ENCODE measurements at regions of chr3 and their contacts with region 1.

Region 1: GRCh38 chr3:52339612-52340011 is 23.5 kb downstream of the DNAH1 start:
- DNase-seq: peak; percentile 71
- H3K4me3 ChIP-seq: no peak overlapping the region
- H3K27ac ChIP-seq: no peak overlapping the region
- H3K27me3 ChIP-seq: no peaks in the 10 kb centered on the region
- CTCF ChIP-seq: peak; percentile 70

Region 2: GRCh38 chr3:52225452-52226228 is 114.0 kb before region 1 on chr3 and contains the start of gene TLR9:
- CTCF ChIA-PET with region 1: interaction called, 128 read pairs
- POLR2A ChIA-PET with region 1: no interaction called
- DNase-seq: no peak
- H3K4me3 ChIP-seq: no peak within 1 kb of the TSS
- H3K27ac ChIP-seq: no peak within 1 kb of the TSS
- H3K27me3 ChIP-seq: no peaks in the 10 kb centered on the region
- CTCF ChIP-seq: no peak
- polyA plus RNA-seq, gene TLR9: 0.02 and 0.05 TPM in 2 replicates

Region 3: GRCh38 chr3:52238761-52239701 is 100.6 kb before region 1 on chr3 and contains the start of gene TWF2:
- CTCF ChIA-PET with region 1: interaction called, 22 read pairs
- POLR2A ChIA-PET with region 1: no interaction called
- DNase-seq: peak; percentile 45
- H3K4me3 ChIP-seq: peak within 1 kb of the TSS; percentile 96
- H3K27ac ChIP-seq: peak within 1 kb of the TSS; percentile 99
- H3K27me3 ChIP-seq: no peaks in the 10 kb centered on the region
- CTCF ChIP-seq: peak; percentile 40
- polyA plus RNA-seq, gene TWF2: 96.6 and 128 TPM in 2 replicates

Region 4: GRCh38 chr3:52291508-52292181 is 48.0 kb before region 1 on chr3:
- CTCF ChIA-PET with region 1: interaction called, 51 read pairs
- POLR2A ChIA-PET with region 1: no interaction called
- DNase-seq: no peak
- H3K4me3 ChIP-seq: no peak overlapping the region
- H3K27ac ChIP-seq: no peak overlapping the region
- H3K27me3 ChIP-seq: no peaks in the 10 kb centered on the region
- CTCF ChIP-seq: peak; percentile 51

Region 5: GRCh38 chr3:52318186-52318816 is 21.3 kb before region 1 on chr3:
- CTCF ChIA-PET with region 1: interaction called, 10 read pairs
- POLR2A ChIA-PET with region 1: no interaction called
- DNase-seq: no peak
- H3K4me3 ChIP-seq: no peak overlapping the region
- H3K27ac ChIP-seq: no peak overlapping the region
- H3K27me3 ChIP-seq: peaks cover 2% of the 10 kb centered on the region
- CTCF ChIP-seq: no peak

Measured in AG04450 (cell line).